Activated T-helper 2 cell treated with anti-CD3 and anti-CD28 coated beads, Interferon-gamma antibody, Interleukin-2, Interleukin-4, amounts not matched to agents 10 μg/mL and 5 μg/mL and 100 μg/mL, durations not matched to agents 14 hours and 24 hours and 36 hours (primary cell): ENCODE measurements at regions of chr6 and their contacts with region 1.

Region 1: GRCh38 chr6:49366539-49366938 is 96.5 kb downstream of the MMUT start:
- DNase-seq: no peak
- H3K4me3 Mint-ChIP-seq: no peak overlapping the region
- H3K27ac Mint-ChIP-seq: no peak overlapping the region
- H3K4me1 Mint-ChIP-seq: no peaks in the 10 kb centered on the region
- H3K27me3 Mint-ChIP-seq: no peaks in the 10 kb centered on the region

Region 2: GRCh38 chr6:49142421-49143151 is 224.0 kb before region 1 on chr6:
- intact Hi-C with region 1: no loop called
- DNase-seq: no peak
- H3K4me3 Mint-ChIP-seq: no peak overlapping the region
- H3K27ac Mint-ChIP-seq: no peak overlapping the region
- H3K4me1 Mint-ChIP-seq: no peaks in the 10 kb centered on the region
- H3K27me3 Mint-ChIP-seq: no peaks in the 10 kb centered on the region

Region 3: DNA sequence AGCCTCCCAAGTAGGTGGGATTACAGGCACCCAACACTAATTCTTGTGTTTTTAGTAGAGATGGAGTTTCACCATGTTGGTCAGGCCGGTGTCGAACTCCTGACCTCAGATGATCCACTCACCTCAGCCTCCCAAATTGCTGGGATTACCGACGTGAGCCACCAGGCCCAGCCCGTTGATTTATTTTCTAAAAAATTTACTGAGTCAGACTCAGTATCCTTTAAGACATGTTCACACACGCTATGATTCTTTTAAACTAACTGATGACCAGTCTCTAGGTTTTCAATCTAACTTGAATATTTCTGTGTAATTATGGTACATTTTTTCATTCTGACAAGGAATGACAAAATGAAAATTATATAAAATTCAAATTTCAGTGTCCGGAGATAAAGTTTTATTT is 18.0 kb before region 1 on chr6:
- intact Hi-C with region 1: loop called (anchors 1 kb)
- DNase-seq: no peak
- H3K4me3 Mint-ChIP-seq: no peak overlapping the region
- H3K27ac Mint-ChIP-seq: no peak overlapping the region
- H3K4me1 Mint-ChIP-seq: no peaks in the 10 kb centered on the region
- H3K27me3 Mint-ChIP-seq: no peaks in the 10 kb centered on the region